ENCODE measurements at regions of chr14 and their contacts with region 1.

Region 1: DNA sequence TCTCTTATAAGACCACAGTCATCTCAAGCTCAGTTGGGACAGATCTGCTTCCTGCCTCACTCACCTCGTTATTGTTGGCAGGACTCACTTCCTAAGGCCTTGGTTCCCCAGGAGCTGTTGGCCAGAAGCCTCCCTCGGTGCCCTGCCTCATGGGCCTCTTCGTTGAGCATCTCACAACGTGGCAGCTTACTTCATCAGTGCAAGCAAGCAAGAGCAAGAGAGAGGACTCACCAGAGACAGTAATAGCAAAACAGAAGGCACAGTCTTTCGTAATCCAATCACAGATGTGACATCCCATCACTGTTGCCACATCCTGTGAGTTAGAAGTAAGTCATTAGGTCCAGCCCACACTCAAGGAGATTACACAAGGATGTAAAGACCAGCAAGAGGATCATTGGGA is 5.1 kb upstream of the NUMB start:
- DNase-seq: peak in 21 of 42 donors; percentile 11 to 66 (median 35)

Region 2: DNA sequence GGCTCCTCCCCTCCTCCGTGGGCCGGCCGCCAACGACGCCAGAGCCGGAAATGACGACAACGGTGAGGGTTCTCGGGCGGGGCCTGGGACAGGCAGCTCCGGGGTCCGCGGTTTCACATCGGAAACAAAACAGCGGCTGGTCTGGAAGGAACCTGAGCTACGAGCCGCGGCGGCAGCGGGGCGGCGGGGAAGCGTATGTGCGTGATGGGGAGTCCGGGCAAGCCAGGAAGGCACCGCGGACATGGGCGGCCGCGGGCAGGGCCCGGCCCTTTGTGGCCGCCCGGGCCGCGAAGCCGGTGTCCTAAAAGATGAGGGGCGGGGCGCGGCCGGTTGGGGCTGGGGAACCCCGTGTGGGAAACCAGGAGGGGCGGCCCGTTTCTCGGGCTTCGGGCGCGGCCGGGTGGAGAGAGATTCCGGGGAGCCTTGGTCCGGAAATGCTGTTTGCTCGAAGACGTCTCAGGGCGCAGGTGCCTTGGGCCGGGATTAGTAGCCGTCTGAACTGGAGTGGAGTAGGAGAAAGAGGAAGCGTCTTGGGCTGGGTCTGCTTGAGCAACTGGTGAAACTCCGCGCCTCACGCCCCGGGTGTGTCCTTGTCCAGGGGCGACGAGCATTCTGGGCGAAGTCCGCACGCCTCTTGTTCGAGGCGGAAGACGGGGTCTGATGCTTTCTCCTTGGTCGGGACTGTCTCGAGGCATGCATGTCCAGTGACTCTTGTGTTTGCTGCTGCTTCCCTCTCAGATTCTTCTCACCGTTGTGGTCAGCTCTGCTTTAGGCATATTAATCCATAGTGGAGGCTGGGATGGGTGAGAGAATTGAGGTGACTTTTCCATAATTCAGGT is 326.8 kb before region 1 on chr14 and contains the start of gene PSEN1:
- intact Hi-C with region 1: loop called (anchors 10 kb)
- DNase-seq: peak; percentile 96 to 100 (median 99)

Region 3: GRCh38 chr14:73283608-73284379 is 179.6 kb before region 1 on chr14:
- intact Hi-C with region 1: loop called (anchors 10 kb)
- DNase-seq: peak in 41 of 42 donors; percentile 18 to 88 (median 60)

Region 4: GRCh38 chr14:73295198-73295796 is 168.1 kb before region 1 on chr14:
- intact Hi-C with region 1: loop called (anchors 5 kb)
- DNase-seq: peak in 5 of 42 donors; percentile 9 to 55 (median 45)